ENCODE measurements at regions of chr5 and their contacts with region 1.

Region 1: GRCh38 chr5:134113902-134114875 is at the start of gene TCF7:
- DNase-seq: peak; percentile 59 to 79
- H3K4me3 ChIP-seq: peak within 1 kb of the TSS; percentile 62 to 89 (median 77)
- H3K27ac ChIP-seq: no peak within 1 kb of the TSS
- H3K4me1 ChIP-seq: peaks cover 0 to 15% (median 9%) of the 10 kb centered on the region in 4 experiments; a peak in 6 of 7 replicates
- H3K27me3 ChIP-seq: peaks cover 20 to 35% (median 32%) of the 10 kb centered on the region in 4 experiments
- CTCF ChIP-seq: no peak
- EP300 ChIP-seq: no peak
- POLR2A ChIP-seq: peak in 1 of 2 experiments; percentile 79; a peak in 2 of 3 replicates
- RAD21 ChIP-seq: no peak
- total RNA-seq, gene TCF7: 6.8 and 8.5 TPM in 2 replicates

Region 2: DNA sequence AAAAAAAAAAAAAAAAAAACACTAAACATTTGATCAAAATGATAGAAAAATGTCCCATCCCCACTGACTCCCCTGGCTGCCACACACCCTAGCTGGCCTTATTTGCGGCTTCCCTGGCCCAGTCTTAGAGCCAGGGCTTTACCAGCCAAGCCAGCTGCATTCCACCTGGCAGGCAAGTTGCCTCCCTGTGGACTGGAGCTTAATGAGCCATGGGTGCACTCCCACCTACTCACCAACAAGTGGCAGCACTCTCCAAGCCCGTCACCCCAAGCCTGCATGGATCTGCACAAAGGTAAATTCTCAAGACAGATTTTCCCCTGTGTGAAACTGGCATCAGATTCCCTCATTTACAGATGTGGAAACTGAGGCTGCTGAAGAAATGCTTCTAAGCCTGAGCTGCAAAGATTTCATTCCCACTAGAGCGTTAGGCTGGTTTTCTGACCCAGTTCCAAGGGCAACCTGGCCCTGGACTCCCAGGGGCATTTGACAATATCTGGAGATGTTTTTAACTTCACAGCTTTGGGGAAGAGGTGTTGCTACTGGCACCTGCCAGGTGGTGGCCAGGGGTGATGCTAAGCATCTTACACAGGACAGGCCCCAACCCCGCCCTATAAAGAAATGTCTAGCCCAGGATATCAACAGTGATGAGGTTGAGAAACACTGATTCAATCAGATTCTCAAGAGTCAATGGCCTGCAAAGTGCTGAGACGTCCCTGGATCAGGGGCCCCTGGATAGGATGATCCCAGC is 87.5 kb before region 1 on chr5:
- CTCF ChIA-PET with region 1: interaction called, 11 read pairs
- POLR2A ChIA-PET with region 1: no interaction called
- DNase-seq: peak; percentile 66 to 67
- H3K4me3 ChIP-seq: no peak overlapping the region
- H3K27ac ChIP-seq: no peak overlapping the region
- H3K4me1 ChIP-seq: no peaks in the 10 kb centered on the region
- H3K27me3 ChIP-seq: no peaks in the 10 kb centered on the region
- CTCF ChIP-seq: peak; percentile 69 to 94 (median 90)
- EP300 ChIP-seq: no peak
- POLR2A ChIP-seq: no peak
- RAD21 ChIP-seq: peak; percentile 66 to 70

Region 3: GRCh38 chr5:134125039-134126015 is 11.1 kb after region 1 on chr5:
- CTCF ChIA-PET with region 1: interaction called, 9 read pairs
- POLR2A ChIA-PET with region 1: interaction called, 15 read pairs
- DNase-seq: no peak
- H3K4me3 ChIP-seq: no peak overlapping the region
- H3K27ac ChIP-seq: no peak overlapping the region
- H3K4me1 ChIP-seq: no peaks in the 10 kb centered on the region; a peak in 1 of 7 replicates
- H3K27me3 ChIP-seq: no peaks in the 10 kb centered on the region
- CTCF ChIP-seq: no peak
- EP300 ChIP-seq: no peak
- POLR2A ChIP-seq: no peak
- RAD21 ChIP-seq: no peak